CD4-positive, alpha-beta T cell (primary cell): ENCODE measurements at regions of chr12 and their contacts with region 1.

Region 1: DNA sequence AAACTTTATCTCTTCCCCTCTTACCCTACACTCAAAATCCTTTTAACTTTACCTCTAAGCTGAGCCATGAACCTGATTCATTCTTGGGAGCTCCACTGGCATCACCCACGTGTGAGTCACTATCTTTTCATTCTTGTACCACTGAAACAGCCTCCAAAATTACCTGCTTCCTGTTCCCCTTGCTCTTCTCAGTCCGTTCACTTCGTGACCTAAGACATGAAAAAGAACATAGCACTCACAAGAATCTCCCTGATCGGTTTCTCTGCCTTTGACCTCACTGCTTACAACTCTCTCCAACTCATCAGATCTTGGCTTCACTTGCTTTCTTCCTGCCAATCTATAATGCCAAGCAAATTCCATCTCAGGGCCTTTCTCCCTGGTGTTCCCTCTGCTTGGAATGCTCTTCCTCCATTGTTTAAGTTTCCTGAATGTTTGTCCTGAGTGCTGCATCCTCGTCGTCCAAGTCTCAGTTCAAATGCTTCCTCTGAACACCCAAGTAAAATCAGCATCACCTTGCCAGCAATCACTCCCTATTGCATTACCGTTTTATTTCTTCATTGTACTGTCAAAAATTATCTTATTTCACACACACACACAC is 9.2 kb downstream of the GLIPR1 start:
- DNase-seq: peak in 3 of 14 experiments; percentile 32 to 46 (median 34)
- ATAC-seq: peak; percentile 49
- H3K4me3 ChIP-seq: no peak overlapping the region
- H3K4me3 Mint-ChIP-seq: peak overlapping the region; percentile 2
- H3K27ac ChIP-seq: peak overlapping the region in 1 of 2 donors; percentile 20
- H3K27ac Mint-ChIP-seq: peak overlapping the region; percentile 61
- H3K4me1 ChIP-seq: peaks cover 19% of the 10 kb centered on the region
- H3K4me1 Mint-ChIP-seq: peaks cover 48% of the 10 kb centered on the region
- H3K27me3 ChIP-seq: no peaks in the 10 kb centered on the region
- H3K27me3 Mint-ChIP-seq: no peaks in the 10 kb centered on the region
- CTCF ChIP-seq: no peak

Region 2: GRCh38 chr12:75334384-75335030 is 155.2 kb before region 1 on chr12 and contains the start of gene GLIPR1L1:
- CTCF ChIA-PET with region 1: interaction called, 14 read pairs
- POLR2A ChIA-PET with region 1: no interaction called
- intact Hi-C with region 1: loop called (anchors 5 kb)
- DNase-seq: peak; percentile 67 to 90 (median 78)
- ATAC-seq: peak; percentile 79
- H3K4me3 ChIP-seq: peak within 1 kb of the TSS; percentile 39
- H3K4me3 Mint-ChIP-seq: peak within 1 kb of the TSS; percentile 57
- H3K27ac ChIP-seq: no peak within 1 kb of the TSS
- H3K27ac Mint-ChIP-seq: no peak within 1 kb of the TSS
- H3K4me1 ChIP-seq: peaks cover 17% of the 10 kb centered on the region
- H3K4me1 Mint-ChIP-seq: peaks cover 21% of the 10 kb centered on the region
- H3K27me3 ChIP-seq: peaks cover 12 to 16% of the 10 kb centered on the region in 2 experiments
- H3K27me3 Mint-ChIP-seq: peaks cover 35% of the 10 kb centered on the region
- CTCF ChIP-seq: peak; percentile 90
- total RNA-seq, gene GLIPR1L1: not detected

Region 3: GRCh38 chr12:75437564-75437963 is 52.1 kb before region 1 on chr12:
- CTCF ChIA-PET with region 1: interaction called, 15 read pairs
- POLR2A ChIA-PET with region 1: no interaction called
- intact Hi-C with region 1: loop called (anchors 5 kb)
- DNase-seq: peak in 5 of 14 experiments; percentile 6 to 79 (median 63)
- ATAC-seq: peak; percentile 78
- H3K4me3 ChIP-seq: no peak overlapping the region
- H3K4me3 Mint-ChIP-seq: no peak overlapping the region
- H3K27ac ChIP-seq: no peak overlapping the region
- H3K27ac Mint-ChIP-seq: no peak overlapping the region
- H3K4me1 ChIP-seq: peaks cover 13% of the 10 kb centered on the region
- H3K4me1 Mint-ChIP-seq: peaks cover 15% of the 10 kb centered on the region
- H3K27me3 ChIP-seq: no peaks in the 10 kb centered on the region
- H3K27me3 Mint-ChIP-seq: peaks cover 14% of the 10 kb centered on the region
- CTCF ChIP-seq: peak; percentile 40

Region 4: DNA sequence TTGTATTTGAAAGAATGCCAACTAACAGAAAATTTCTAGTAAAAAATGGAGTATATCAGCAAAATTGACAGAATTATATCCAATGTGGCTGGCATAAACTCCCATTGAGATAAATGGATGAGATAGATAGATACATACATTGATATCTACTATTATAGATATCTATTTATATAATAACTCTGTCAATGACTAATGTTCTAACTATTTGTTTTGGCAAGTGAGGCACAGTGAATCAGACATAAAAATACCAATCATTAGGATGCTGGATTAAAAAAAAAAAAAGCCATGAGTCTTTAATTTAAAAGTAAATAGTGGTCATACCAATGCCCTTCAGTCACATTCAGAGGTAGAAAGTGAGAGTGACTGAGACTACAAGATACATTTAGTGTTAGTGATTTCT is 42.9 kb before region 1 on chr12:
- CTCF ChIA-PET with region 1: no interaction called
- POLR2A ChIA-PET with region 1: no interaction called
- intact Hi-C with region 1: loop called in 1 of 2 experiments (anchors 2 kb)
- DNase-seq: no peak
- ATAC-seq: no peak
- H3K4me3 ChIP-seq: no peak overlapping the region
- H3K4me3 Mint-ChIP-seq: no peak overlapping the region
- H3K27ac ChIP-seq: no peak overlapping the region
- H3K27ac Mint-ChIP-seq: no peak overlapping the region
- H3K4me1 ChIP-seq: no peaks in the 10 kb centered on the region
- H3K4me1 Mint-ChIP-seq: no peaks in the 10 kb centered on the region
- H3K27me3 ChIP-seq: no peaks in the 10 kb centered on the region
- H3K27me3 Mint-ChIP-seq: peaks cover 6% of the 10 kb centered on the region
- CTCF ChIP-seq: no peak

Region 5: DNA sequence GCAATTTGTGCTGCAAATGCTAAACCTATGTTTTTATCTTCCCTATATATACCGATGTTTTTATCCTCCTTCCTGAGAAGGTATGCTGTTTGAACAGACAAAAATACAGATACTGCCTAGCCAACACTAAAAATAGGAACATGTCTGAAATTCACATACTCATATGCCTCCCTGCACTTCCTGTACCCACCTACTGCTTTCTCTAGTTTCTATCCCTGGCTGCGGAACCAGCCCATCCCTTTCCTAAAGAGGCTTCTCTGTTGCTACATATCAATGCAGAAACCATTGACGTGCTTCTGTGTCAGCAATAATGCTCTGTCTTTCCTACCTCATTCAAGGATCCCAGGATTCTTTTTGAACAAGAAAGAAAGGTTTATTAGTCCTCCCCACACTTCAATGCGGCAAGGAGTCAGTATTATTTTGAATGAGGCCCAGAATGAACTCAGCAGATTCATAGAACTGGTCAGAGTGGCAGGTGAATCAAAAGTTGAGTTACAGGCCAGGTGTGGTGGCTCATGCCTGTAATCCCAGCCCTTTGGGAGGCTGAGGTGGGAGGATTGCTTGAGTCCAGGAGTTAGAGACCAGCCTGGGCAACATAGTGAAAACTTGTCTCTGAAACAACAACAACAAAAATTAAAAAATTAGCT is 662.6 kb after region 1 on chr12:
- CTCF ChIA-PET with region 1: no interaction called
- POLR2A ChIA-PET with region 1: no interaction called
- intact Hi-C with region 1: no loop called
- DNase-seq: peak in 2 of 14 experiments; percentile 7 to 19
- ATAC-seq: no peak
- H3K4me3 ChIP-seq: no peak overlapping the region
- H3K4me3 Mint-ChIP-seq: no peak overlapping the region
- H3K27ac ChIP-seq: no peak overlapping the region
- H3K27ac Mint-ChIP-seq: no peak overlapping the region
- H3K4me1 ChIP-seq: no peaks in the 10 kb centered on the region
- H3K4me1 Mint-ChIP-seq: peaks cover 6% of the 10 kb centered on the region
- H3K27me3 ChIP-seq: no peaks in the 10 kb centered on the region
- H3K27me3 Mint-ChIP-seq: no peaks in the 10 kb centered on the region
- CTCF ChIP-seq: no peak